Dorsolateral prefrontal cortex (tissue), 120 donors: ENCODE measurements at regions of chr17 and their contacts with region 1.

Region 1: DNA sequence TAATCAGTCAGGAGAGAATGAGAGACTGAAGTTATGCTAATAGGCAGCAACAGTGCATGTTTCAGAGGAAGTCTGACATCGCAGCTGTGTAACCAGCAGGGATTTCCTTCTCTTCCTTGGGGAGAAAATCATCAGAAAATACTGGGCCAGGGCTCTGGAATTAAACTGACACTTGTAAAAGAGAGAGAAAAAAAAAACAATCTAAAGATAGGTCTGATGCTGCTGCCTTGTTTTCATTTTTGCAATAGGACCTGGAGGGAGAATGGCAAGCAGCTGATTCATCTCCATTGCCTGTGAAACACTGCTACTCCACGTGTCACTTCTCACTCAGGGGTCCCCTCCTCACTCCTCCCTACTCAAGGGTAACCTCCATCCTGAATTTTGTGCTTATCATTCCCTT is 17.7 kb upstream of the CORO6 start:
- DNase-seq: no peak
- H3K4me3 ChIP-seq: peak overlapping the region in 3 of 59 donors; percentile 2 to 16 (median 12)
- H3K27ac ChIP-seq: peak overlapping the region in 57 of 59 donors; percentile 20 to 87 (median 72)
- H3K27me3 ChIP-seq: no peaks in the 10 kb centered on the region
- CTCF ChIP-seq: peak in 1 of 56 donors; percentile 4

Region 2: GRCh38 chr17:29682054-29682453 is 41.6 kb after region 1 on chr17:
- intact Hi-C with region 1: loop called in 1 of 2 experiments (anchors 5 kb)
- DNase-seq: no peak
- H3K4me3 ChIP-seq: peak overlapping the region in 1 of 59 donors; percentile 15
- H3K27ac ChIP-seq: peak overlapping the region in 58 of 59 donors; percentile 1 to 96 (median 66)
- H3K27me3 ChIP-seq: no peaks in the 10 kb centered on the region
- CTCF ChIP-seq: peak in 8 of 56 donors; percentile 8 to 27 (median 20)

Region 3: GRCh38 chr17:29760761-29761696 is 120.6 kb after region 1 on chr17:
- intact Hi-C with region 1: loop called in 1 of 2 experiments (anchors 5 kb)
- DNase-seq: peak; percentile 44 to 88 (median 74)
- H3K4me3 ChIP-seq: peak overlapping the region; percentile 58 to 91 (median 83)
- H3K27ac ChIP-seq: peak overlapping the region; percentile 27 to 93 (median 85)
- H3K27me3 ChIP-seq: no peaks in the 10 kb centered on the region
- CTCF ChIP-seq: peak in 17 of 56 donors; percentile 3 to 36 (median 22)

Region 4: GRCh38 chr17:29777663-29778062 is 137.2 kb after region 1 on chr17:
- intact Hi-C with region 1: loop called (anchors 1 to 5 kb)
- DNase-seq: no peak
- H3K4me3 ChIP-seq: no peak overlapping the region
- H3K27ac ChIP-seq: peak overlapping the region in 5 of 59 donors; percentile 13 to 53 (median 24)
- H3K27me3 ChIP-seq: no peaks in the 10 kb centered on the region
- CTCF ChIP-seq: no peak